ENCODE measurements at regions of chr1 and their contacts with region 1.

Region 1: GRCh38 chr1:159798893-159799292 is 3.3 kb upstream of the FCRL6 start:
- DNase-seq: peak in 1 of 2 experiments; percentile 59
- H3K4me3 ChIP-seq: no peak overlapping the region
- H3K27ac ChIP-seq: no peak overlapping the region
- H3K4me1 ChIP-seq: no peaks in the 10 kb centered on the region
- H3K27me3 ChIP-seq: no peaks in the 10 kb centered on the region
- CTCF ChIP-seq: peak; percentile 52 to 96 (median 91)
- EP300 ChIP-seq: no peak
- POLR2A ChIP-seq: no peak
- RAD21 ChIP-seq: peak; percentile 83 to 85

Region 2: GRCh38 chr1:159197561-159198557 is 601.0 kb before region 1 on chr1:
- CTCF ChIA-PET with region 1: interaction called, 17 read pairs
- POLR2A ChIA-PET with region 1: no interaction called
- DNase-seq: peak in 1 of 2 experiments; percentile 89
- H3K4me3 ChIP-seq: no peak overlapping the region
- H3K27ac ChIP-seq: no peak overlapping the region
- H3K4me1 ChIP-seq: no peaks in the 10 kb centered on the region
- H3K27me3 ChIP-seq: no peaks in the 10 kb centered on the region
- CTCF ChIP-seq: peak; percentile 85 to 99 (median 98)
- EP300 ChIP-seq: no peak
- POLR2A ChIP-seq: no peak
- RAD21 ChIP-seq: peak; percentile 77 to 82

Region 3: DNA sequence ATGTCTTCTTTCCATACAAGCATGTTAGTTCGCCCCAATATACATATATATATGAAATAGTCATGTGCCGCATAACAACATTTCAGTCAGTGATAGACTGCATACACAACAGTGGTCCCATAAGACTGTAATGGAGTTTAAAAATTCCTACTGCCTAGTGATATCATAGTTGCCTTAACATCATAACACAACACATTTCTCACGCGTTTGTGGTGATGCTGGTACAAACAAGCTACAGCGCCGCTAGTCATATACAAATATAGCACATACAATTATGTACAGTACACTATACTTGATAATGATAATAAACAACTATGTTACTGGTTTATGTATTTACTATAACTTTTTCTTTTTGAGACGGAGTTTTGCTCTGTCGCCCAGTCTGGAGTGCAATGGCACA is 17.0 kb after region 1 on chr1:
- CTCF ChIA-PET with region 1: interaction called, 38 read pairs
- POLR2A ChIA-PET with region 1: no interaction called
- DNase-seq: no peak
- H3K4me3 ChIP-seq: no peak overlapping the region
- H3K27ac ChIP-seq: no peak overlapping the region
- H3K4me1 ChIP-seq: no peaks in the 10 kb centered on the region
- H3K27me3 ChIP-seq: 0 out of 7 replicates have a peak, but pooled peaks cover 0 to 2% (median 0%) of the 10 kb centered on the region in 4 experiments
- CTCF ChIP-seq: no peak
- EP300 ChIP-seq: no peak
- POLR2A ChIP-seq: no peak
- RAD21 ChIP-seq: no peak

Region 4: DNA sequence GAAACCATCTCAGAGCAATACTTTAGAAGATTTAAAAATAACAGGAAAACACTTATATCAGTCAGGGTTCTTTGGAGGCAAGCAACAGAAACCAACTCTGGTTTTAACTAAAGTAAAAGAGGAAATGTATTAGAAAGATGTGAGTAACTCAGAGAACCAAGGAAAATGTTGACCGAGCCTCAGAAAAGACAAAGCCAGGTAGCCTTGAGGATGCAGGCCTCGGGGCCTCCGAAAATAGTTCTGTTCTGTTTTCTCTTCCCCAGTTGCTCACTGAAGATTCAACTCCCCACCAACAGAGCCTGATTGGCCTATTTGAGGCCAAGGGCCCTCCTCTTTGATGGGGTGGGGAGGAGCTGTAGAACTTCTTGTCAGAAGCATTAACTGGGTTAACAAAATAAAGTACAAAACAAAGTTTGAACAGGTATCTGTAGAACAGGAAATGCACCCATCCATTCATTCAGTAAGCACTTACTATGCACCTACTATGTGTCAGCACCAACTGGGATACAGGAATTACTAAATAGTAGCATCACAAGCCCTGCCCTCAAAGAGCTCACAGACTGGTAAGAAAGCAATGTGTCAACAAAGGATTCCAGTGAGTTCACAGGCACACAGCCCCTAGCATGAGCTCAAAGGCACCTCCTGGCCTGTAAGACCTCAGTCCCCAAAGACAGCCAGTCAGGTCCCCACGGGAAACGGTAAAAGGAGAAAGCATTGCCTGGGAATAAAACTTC is 40.4 kb after region 1 on chr1:
- CTCF ChIA-PET with region 1: interaction called, 19 read pairs
- POLR2A ChIA-PET with region 1: no interaction called
- DNase-seq: no peak
- H3K4me3 ChIP-seq: no peak overlapping the region
- H3K27ac ChIP-seq: no peak overlapping the region
- H3K4me1 ChIP-seq: no peaks in the 10 kb centered on the region
- H3K27me3 ChIP-seq: peaks cover 0 to 2% (median 0%) of the 10 kb centered on the region in 4 experiments; a peak in 2 of 7 replicates
- CTCF ChIP-seq: no peak
- EP300 ChIP-seq: no peak
- POLR2A ChIP-seq: no peak
- RAD21 ChIP-seq: no peak

Region 5: DNA sequence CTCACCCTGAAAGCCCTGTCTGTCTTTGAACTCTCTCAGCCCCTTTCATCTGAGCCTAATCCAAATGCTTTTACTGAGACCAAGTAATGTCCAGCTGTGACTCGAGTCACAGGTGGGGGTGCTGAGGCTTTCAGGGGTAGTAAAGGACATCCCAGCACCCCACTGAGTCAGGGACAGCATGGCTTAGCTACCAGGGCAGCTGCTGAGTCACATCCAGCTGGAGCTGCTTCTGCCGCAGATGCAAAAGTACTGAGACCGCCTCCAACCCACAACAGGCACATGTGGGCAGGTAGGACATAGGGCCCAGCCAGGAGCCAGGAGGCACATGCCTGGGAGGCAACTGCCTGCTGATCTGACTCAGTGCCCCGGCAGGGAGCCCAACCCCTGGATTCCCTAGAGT is 70.3 kb after region 1 on chr1:
- CTCF ChIA-PET with region 1: interaction called, 23 read pairs
- POLR2A ChIA-PET with region 1: no interaction called
- DNase-seq: no peak
- H3K4me3 ChIP-seq: no peak overlapping the region
- H3K27ac ChIP-seq: no peak overlapping the region
- H3K4me1 ChIP-seq: no peaks in the 10 kb centered on the region; a peak in 1 of 7 replicates
- H3K27me3 ChIP-seq: no peaks in the 10 kb centered on the region
- CTCF ChIP-seq: no peak
- EP300 ChIP-seq: no peak
- POLR2A ChIP-seq: no peak
- RAD21 ChIP-seq: no peak

Region 6: DNA sequence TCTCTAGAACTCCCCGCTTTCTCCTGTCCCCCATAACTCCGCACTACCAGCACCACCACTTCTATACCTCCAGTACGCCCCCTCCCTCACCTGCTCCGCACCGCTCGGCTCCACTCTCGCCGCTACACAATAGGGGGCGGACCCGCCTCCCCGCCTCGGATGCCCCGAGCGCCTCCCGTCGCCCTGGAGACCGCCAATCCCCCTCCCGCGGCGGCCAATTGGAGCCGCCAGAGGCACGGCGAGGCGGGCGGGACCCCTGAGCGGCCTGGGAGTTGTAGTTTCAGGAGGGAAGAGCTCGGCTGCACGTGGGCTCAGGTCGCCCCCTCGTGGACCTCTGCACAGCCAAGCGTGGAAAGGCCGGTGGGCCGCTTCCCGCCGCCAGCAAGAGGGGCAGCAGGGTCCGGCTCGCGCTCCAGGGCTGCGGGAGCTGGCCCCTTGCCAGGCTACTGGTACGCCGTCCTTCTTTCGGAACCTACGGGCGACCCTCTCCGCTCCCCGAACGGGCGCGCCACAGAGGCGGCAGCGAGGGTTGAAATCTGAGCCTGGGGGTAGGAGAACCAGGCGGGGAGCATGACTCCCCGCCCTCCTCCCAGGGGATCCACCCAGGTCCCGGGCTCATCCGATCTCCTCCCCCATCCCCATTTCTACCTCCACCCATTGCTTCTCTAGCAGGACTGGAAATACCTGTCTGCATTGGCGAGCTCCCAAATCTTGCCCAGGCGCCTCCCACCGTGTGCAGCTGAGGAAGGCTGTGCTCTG is 146.8 kb after region 1 on chr1 and contains the start of gene IGSF9:
- CTCF ChIA-PET with region 1: interaction called, 15 read pairs
- POLR2A ChIA-PET with region 1: no interaction called
- DNase-seq: peak; percentile 81 to 96
- H3K4me3 ChIP-seq: peak within 1 kb of the TSS; percentile 49 to 82 (median 62)
- H3K27ac ChIP-seq: peak within 1 kb of the TSS; percentile 80; the same call in 1 of the 2 replicates
- H3K4me1 ChIP-seq: peaks cover 7 to 24% (median 15%) of the 10 kb centered on the region in 4 experiments
- H3K27me3 ChIP-seq: no peaks in the 10 kb centered on the region
- CTCF ChIP-seq: peak; percentile 27 to 41 (median 40)
- EP300 ChIP-seq: no peak
- POLR2A ChIP-seq: peak; percentile 19 to 79
- RAD21 ChIP-seq: peak; percentile 37 to 44; a peak in 3 of 4 replicates
- total RNA-seq, gene IGSF9: 28.1 and 29.2 TPM in 2 replicates

Measured in H1 (cell line).